Heart left ventricle (tissue), 16 donors: ENCODE measurements at regions of chr6 and their contacts with region 1.

Region 1: GRCh38 chr6:50520326-50521266 is 192.7 kb upstream of the TFAP2D start:
- DNase-seq: no peak
- ATAC-seq: no peak
- H3K4me3 ChIP-seq: no peak overlapping the region
- H3K27ac ChIP-seq: no peak overlapping the region
- H3K4me1 ChIP-seq: no peaks in the 10 kb centered on the region
- H3K27me3 ChIP-seq: no peaks in the 10 kb centered on the region
- CTCF ChIP-seq: no peak
- POLR2A ChIP-seq: no peak

Region 2: GRCh38 chr6:50461696-50462095 is 58.9 kb before region 1 on chr6:
- intact Hi-C with region 1: loop called in 1 of 10 experiments (anchors 10 kb)
- DNase-seq: no peak
- ATAC-seq: no peak
- H3K4me3 ChIP-seq: no peak overlapping the region
- H3K27ac ChIP-seq: no peak overlapping the region
- H3K4me1 ChIP-seq: no peaks in the 10 kb centered on the region
- H3K27me3 ChIP-seq: no peaks in the 10 kb centered on the region
- CTCF ChIP-seq: no peak
- POLR2A ChIP-seq: no peak

Region 3: GRCh38 chr6:50681206-50681824 is 160.7 kb after region 1 on chr6:
- intact Hi-C with region 1: no loop called
- DNase-seq: no peak
- ATAC-seq: no peak
- H3K4me3 ChIP-seq: no peak overlapping the region
- H3K27ac ChIP-seq: no peak overlapping the region
- H3K4me1 ChIP-seq: no peaks in the 10 kb centered on the region
- H3K27me3 ChIP-seq: no peaks in the 10 kb centered on the region
- CTCF ChIP-seq: no peak
- POLR2A ChIP-seq: no peak